ENCODE measurements at regions of chr20 and their contacts with region 1.

Region 1: GRCh38 chr20:23340524-23340923 is 10.1 kb upstream of the NXT1 start:
- DNase-seq: peak; percentile 61
- H3K4me3 Mint-ChIP-seq: no peak overlapping the region
- H3K27ac Mint-ChIP-seq: no peak overlapping the region
- H3K4me1 Mint-ChIP-seq: no peaks in the 10 kb centered on the region
- H3K27me3 Mint-ChIP-seq: no peaks in the 10 kb centered on the region
- CTCF ChIP-seq: peak; percentile 62

Region 2: DNA sequence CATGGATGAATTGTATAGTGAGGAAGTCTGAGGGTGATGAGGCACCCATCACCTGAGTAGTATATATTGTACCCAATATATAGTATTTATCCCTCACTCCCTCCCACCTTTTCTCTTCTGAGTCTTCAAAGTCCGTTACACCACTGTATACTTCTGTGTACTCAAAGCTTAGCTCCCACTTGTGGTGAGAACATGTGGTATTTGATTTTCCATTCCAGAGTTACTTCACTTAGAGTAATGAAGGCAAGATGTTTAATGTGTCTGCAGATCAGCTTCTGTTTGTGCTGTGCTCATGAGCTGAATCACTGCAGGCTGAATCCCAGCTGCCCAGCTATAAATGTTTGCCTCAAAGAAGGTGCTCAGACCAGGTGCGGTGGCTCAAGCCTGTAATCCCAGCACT is 616.9 kb before region 1 on chr20:
- CTCF ChIA-PET with region 1: interaction called, 21 read pairs
- POLR2A ChIA-PET with region 1: interaction called, 6 read pairs
- intact Hi-C with region 1: loop called (anchors 1 kb)
- DNase-seq: no peak
- H3K4me3 Mint-ChIP-seq: no peak overlapping the region
- H3K27ac Mint-ChIP-seq: no peak overlapping the region
- H3K4me1 Mint-ChIP-seq: peaks cover 7% of the 10 kb centered on the region
- H3K27me3 Mint-ChIP-seq: no peaks in the 10 kb centered on the region
- CTCF ChIP-seq: no peak

Region 3: GRCh38 chr20:23050847-23051631 is 289.5 kb before region 1 on chr20:
- CTCF ChIA-PET with region 1: interaction called, 5 read pairs
- POLR2A ChIA-PET with region 1: no interaction called
- intact Hi-C with region 1: loop called (anchors 1 kb)
- DNase-seq: peak; percentile 92
- H3K4me3 Mint-ChIP-seq: peak overlapping the region; percentile 74
- H3K27ac Mint-ChIP-seq: peak overlapping the region; percentile 92
- H3K4me1 Mint-ChIP-seq: peaks cover 17% of the 10 kb centered on the region
- H3K27me3 Mint-ChIP-seq: no peaks in the 10 kb centered on the region
- CTCF ChIP-seq: peak; percentile 78

Region 4: GRCh38 chr20:23386304-23387117 is 46.0 kb after region 1 on chr20:
- CTCF ChIA-PET with region 1: no interaction called
- POLR2A ChIA-PET with region 1: no interaction called
- intact Hi-C with region 1: no loop called
- DNase-seq: no peak
- H3K4me3 Mint-ChIP-seq: no peak overlapping the region
- H3K27ac Mint-ChIP-seq: no peak overlapping the region
- H3K4me1 Mint-ChIP-seq: no peaks in the 10 kb centered on the region
- H3K27me3 Mint-ChIP-seq: no peaks in the 10 kb centered on the region
- CTCF ChIP-seq: no peak